ENCODE measurements at regions of chr22 and their contacts with region 1.

Region 1: DNA sequence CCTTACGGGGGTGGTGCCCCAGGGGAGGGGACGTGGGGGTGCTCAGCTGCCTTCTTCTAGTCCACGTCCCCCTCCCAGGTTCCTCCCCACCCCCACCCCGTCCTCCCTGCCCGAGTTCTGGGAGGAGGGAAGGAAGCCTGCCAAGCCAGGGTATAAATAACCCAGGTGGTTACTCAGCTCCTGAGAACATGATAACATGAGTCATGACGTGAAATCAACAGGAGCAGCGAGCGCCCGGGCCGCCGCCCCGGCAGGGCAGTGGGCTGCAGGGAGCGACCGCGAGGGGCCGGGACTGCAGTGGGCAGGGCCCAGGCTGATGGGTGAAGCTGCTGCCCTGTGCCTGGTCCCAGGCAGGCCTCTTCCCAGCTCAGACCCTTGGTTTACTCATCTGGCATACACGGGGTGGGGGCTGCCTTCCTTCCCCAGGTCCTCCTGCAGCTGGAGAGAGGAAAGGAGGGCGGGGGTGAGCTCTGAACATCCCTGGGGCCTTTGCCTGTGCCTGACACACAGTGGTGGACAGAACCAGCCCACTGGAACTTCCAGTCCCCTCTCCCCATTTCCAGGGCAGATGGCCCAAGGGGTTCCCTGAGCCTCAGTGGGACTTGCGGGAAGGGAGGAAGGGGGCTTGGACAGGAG is 8.8 kb upstream of the PDGFB start:
- DNase-seq: peak; percentile 79 to 88 (median 82)
- ATAC-seq: peak; percentile 59 to 85 (median 84)
- H3K4me3 ChIP-seq: peak overlapping the region in 4 of 12 donors; percentile 13 to 24 (median 19)
- H3K27ac ChIP-seq: peak overlapping the region; percentile 53 to 93 (median 84)
- H3K4me1 ChIP-seq: peaks cover 15 to 44% (median 38%) of the 10 kb centered on the region in 12 donors
- H3K27me3 ChIP-seq: peaks cover 0 to 18% (median 0%) of the 10 kb centered on the region in 9 donors
- CTCF ChIP-seq: peak in 2 of 12 donors; percentile 6 to 8
- POLR2A ChIP-seq: peak in 1 of 2 donors; percentile 39

Region 2: DNA sequence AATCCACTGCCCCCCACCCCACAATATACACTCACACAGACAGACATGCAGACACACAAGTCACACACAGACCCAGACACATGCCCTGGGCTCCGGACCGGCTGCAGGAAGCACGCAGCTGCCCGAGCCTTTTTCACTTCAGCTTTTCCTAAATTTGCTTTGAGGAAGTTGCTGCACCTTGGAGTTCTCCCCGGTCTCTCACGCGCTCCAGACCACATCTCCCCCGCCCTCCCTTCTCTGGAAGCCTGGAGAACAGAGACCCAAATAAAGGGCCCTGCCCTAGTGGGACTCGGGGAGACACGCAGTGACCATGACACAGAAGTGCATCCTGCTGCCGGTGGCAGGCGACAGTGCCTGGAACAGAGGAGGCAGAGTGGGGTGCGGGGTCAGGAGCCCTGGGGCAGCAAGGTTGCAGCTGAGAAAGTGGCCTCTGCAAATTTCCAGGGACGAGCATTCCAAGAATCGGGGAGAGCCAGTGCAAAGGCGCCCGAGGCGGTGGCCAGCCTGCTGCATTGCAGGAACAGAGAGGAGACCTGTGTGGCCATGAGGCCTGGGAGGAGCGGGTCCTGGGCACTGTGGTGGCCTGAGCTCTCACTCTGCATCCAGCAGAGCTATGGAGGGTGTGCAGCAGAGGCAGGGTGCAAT is 46.8 kb after region 1 on chr22:
- intact Hi-C with region 1: loop called in 3 of 10 experiments (anchors 5 kb)
- DNase-seq: peak; percentile 65 to 79 (median 71)
- ATAC-seq: peak; percentile 56 to 77 (median 74)
- H3K4me3 ChIP-seq: peak overlapping the region in 10 of 12 donors; percentile 1 to 30 (median 26)
- H3K27ac ChIP-seq: peak overlapping the region; percentile 59 to 87 (median 66)
- H3K4me1 ChIP-seq: peaks cover 6 to 56% (median 43%) of the 10 kb centered on the region in 12 donors
- H3K27me3 ChIP-seq: no peaks in the 10 kb centered on the region
- CTCF ChIP-seq: peak in 5 of 12 donors; percentile 9 to 30 (median 16)
- POLR2A ChIP-seq: no peak

Measured in heart left ventricle (tissue), 16 donors.